MCF 10A (cell line): ENCODE measurements at regions of chr4 and their contacts with region 1.

Region 1: GRCh38 chr4:76377911-76378310 is 43.0 kb downstream of the CCDC158 start:
- DNase-seq: peak; percentile 57
- H3K4me3 Mint-ChIP-seq: no peak overlapping the region
- H3K27ac Mint-ChIP-seq: no peak overlapping the region
- H3K4me1 Mint-ChIP-seq: peaks cover 16% of the 10 kb centered on the region
- H3K27me3 Mint-ChIP-seq: no peaks in the 10 kb centered on the region
- CTCF ChIP-seq: peak; percentile 48

Region 2: GRCh38 chr4:76251441-76252270 is 126.3 kb before region 1 on chr4 and contains the start of gene FAM47E:
- CTCF ChIA-PET with region 1: no interaction called
- POLR2A ChIA-PET with region 1: no interaction called
- intact Hi-C with region 1: loop called (anchors 10 kb)
- DNase-seq: peak; percentile 45
- H3K4me3 Mint-ChIP-seq: peak within 1 kb of the TSS; percentile 70
- H3K27ac Mint-ChIP-seq: peak within 1 kb of the TSS; percentile 7
- H3K4me1 Mint-ChIP-seq: no peaks in the 10 kb centered on the region
- H3K27me3 Mint-ChIP-seq: peaks cover 47% of the 10 kb centered on the region
- CTCF ChIP-seq: peak; percentile 47
- total RNA-seq, gene FAM47E: 1.0 TPM in 2 replicates

Region 3: DNA sequence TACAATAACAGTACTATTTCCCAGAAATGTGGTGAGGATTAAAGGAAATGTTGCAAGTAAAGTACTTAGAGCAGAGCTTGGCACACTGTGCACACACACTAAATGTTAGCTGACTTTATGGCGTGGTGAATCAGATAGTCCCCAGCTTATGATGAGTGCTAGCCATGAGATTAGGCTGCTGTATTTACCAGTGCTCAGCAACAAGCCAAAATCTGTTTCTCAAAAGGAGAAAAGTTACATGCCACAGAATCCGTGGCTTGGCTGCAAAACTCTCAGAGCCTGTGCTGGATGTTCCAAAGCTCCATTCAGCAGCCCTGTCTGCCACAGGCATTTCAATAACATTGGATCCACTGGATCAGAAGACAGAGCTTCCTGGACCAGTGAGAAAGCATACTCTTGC is 84.1 kb before region 1 on chr4:
- CTCF ChIA-PET with region 1: no interaction called
- POLR2A ChIA-PET with region 1: no interaction called
- intact Hi-C with region 1: no loop called
- DNase-seq: no peak
- H3K4me3 Mint-ChIP-seq: no peak overlapping the region
- H3K27ac Mint-ChIP-seq: no peak overlapping the region
- H3K4me1 Mint-ChIP-seq: no peaks in the 10 kb centered on the region
- H3K27me3 Mint-ChIP-seq: no peaks in the 10 kb centered on the region
- CTCF ChIP-seq: no peak

Region 4: GRCh38 chr4:76363556-76364290 is 14.2 kb before region 1 on chr4:
- CTCF ChIA-PET with region 1: interaction called, 5 read pairs
- POLR2A ChIA-PET with region 1: interaction called, 14 read pairs
- intact Hi-C with region 1: no loop called
- DNase-seq: no peak
- H3K4me3 Mint-ChIP-seq: no peak overlapping the region
- H3K27ac Mint-ChIP-seq: no peak overlapping the region
- H3K4me1 Mint-ChIP-seq: peaks cover 6% of the 10 kb centered on the region
- H3K27me3 Mint-ChIP-seq: no peaks in the 10 kb centered on the region
- CTCF ChIP-seq: no peak

Region 5: DNA sequence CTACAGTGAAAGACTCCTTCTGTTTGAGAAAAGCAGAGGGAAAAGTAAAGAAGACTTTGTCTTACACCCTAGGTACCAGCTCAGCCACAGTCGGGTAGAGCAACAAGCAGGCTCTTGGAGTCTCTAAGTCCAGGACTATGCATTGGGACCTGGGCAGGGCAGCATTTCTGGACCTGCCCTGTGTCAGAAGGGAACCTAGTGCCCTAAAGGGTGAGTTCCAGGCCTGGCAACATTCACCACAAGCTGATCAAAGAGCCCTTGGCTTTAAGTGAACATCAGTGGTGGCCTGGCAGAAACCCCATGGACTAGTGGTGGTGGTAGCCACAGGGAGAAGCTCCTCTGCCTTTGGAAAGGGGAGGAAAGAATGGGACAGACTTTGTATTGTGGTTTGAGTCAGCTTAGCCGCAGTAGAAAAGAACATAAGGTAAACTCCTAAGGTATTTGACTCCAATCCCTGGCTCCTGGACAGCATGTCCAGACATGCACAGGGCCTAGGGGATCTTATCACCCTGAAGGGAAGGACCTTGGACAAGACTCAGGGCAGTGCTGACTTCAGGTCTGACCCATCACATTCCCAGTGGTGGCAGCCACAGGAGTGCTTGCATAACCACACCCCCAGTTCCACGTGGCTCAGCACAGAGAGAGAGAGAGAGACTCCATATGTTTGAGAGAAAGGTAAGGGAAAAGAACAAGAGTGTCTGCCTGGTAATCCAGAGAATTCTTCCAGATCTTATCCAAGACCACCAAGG is 10.4 kb after region 1 on chr4:
- CTCF ChIA-PET with region 1: interaction called, 6 read pairs
- POLR2A ChIA-PET with region 1: interaction called, 18 read pairs
- intact Hi-C with region 1: no loop called
- DNase-seq: peak; percentile 91
- H3K4me3 Mint-ChIP-seq: no peak overlapping the region
- H3K27ac Mint-ChIP-seq: peak overlapping the region; percentile 95
- H3K4me1 Mint-ChIP-seq: peaks cover 14% of the 10 kb centered on the region
- H3K27me3 Mint-ChIP-seq: no peaks in the 10 kb centered on the region
- CTCF ChIP-seq: no peak